ENCODE measurements at regions of chr9 and their contacts with region 1.

Region 1: GRCh38 chr9:127968036-127968435 is 12.8 kb downstream of the EEIG1 start:
- DNase-seq: peak; percentile 78
- ATAC-seq: peak; percentile 74
- H3K4me3 ChIP-seq: no peak overlapping the region
- H3K27ac ChIP-seq: peak overlapping the region; percentile 79
- H3K4me1 ChIP-seq: peaks cover 55% of the 10 kb centered on the region
- H3K27me3 ChIP-seq: no peaks in the 10 kb centered on the region
- CTCF ChIP-seq: peak; percentile 25; the same call in 1 of the 2 replicates

Region 2: GRCh38 chr9:127519301-127520166 is 448.5 kb before region 1 on chr9:
- CTCF ChIA-PET with region 1: no interaction called
- POLR2A ChIA-PET with region 1: interaction called, 28 read pairs
- intact Hi-C with region 1: no loop called
- DNase-seq: peak; percentile 96
- ATAC-seq: peak; percentile 82
- H3K4me3 ChIP-seq: no peak overlapping the region; the same call in 1 of the 2 replicates
- H3K27ac ChIP-seq: peak overlapping the region; percentile 89
- H3K4me1 ChIP-seq: peaks cover 45% of the 10 kb centered on the region
- H3K27me3 ChIP-seq: no peaks in the 10 kb centered on the region
- CTCF ChIP-seq: no peak

Region 3: DNA sequence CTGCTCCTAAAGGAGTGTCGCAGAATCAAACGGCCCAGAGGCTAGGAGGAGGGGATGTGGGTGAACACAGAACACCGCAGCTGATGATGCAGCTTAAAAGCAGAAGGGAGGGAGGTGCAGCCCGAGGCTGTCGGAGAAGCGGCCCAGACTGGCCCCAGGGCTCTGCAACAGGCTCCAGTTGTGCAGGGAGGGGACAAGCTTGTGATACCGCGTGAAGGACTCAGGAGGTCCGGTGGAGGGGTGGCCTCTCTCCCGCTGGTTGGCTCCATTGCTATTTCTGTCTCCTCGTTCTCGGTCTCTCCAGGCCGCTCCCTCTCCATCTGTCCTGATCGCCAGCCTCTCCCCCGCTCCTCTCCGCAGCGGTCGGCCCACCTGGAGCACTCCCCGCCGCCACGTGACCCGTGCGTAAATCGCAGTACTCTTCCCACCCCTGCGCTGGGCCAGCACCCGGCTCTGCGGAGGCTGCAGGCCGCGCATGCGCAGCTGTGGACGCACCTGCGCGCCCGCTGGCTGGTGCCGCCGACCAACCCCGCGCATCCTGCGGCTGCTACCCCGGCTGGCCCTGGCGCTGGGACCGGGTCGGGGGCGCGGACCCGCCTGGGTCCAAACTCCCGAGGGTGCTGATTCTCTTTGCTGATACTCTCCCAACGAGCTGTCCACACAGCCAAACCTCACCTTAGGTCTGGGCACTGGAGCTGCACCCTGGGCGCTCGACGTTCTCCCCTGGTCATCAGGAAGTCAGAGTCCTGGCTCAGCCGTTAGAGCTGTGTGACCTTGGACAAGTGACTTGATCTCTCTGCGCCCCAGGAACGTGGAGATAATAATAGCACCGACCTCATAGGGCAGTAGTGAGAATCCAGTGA is 359.7 kb before region 1 on chr9:
- CTCF ChIA-PET with region 1: no interaction called
- POLR2A ChIA-PET with region 1: no interaction called
- intact Hi-C with region 1: no loop called
- DNase-seq: peak; percentile 82
- ATAC-seq: peak; percentile 66
- H3K4me3 ChIP-seq: peak overlapping the region; percentile 62
- H3K27ac ChIP-seq: no peak overlapping the region
- H3K4me1 ChIP-seq: peaks cover 12% of the 10 kb centered on the region; the same call in 1 of the 2 replicates
- H3K27me3 ChIP-seq: no peaks in the 10 kb centered on the region
- CTCF ChIP-seq: no peak

Region 4: GRCh38 chr9:128338852-128339770 is 371.1 kb after region 1 on chr9:
- CTCF ChIA-PET with region 1: no interaction called
- POLR2A ChIA-PET with region 1: no interaction called
- intact Hi-C with region 1: no loop called
- DNase-seq: no peak
- ATAC-seq: no peak
- H3K4me3 ChIP-seq: 0 out of 2 replicates have a peak overlapping the region, but pooled peaks have one; percentile 88
- H3K27ac ChIP-seq: no peak overlapping the region; the same call in 1 of the 2 replicates
- H3K4me1 ChIP-seq: no peaks in the 10 kb centered on the region
- H3K27me3 ChIP-seq: no peaks in the 10 kb centered on the region
- CTCF ChIP-seq: no peak